Activated CD4-positive, alpha-beta T cell treated with anti-CD3 and anti-CD28 coated beads, Interleukin-2, amount 10 ng/mL, durations not matched to agents 24 days and 14 days (primary cell): ENCODE measurements at regions of chr3 and their contacts with region 1.

Region 1: DNA sequence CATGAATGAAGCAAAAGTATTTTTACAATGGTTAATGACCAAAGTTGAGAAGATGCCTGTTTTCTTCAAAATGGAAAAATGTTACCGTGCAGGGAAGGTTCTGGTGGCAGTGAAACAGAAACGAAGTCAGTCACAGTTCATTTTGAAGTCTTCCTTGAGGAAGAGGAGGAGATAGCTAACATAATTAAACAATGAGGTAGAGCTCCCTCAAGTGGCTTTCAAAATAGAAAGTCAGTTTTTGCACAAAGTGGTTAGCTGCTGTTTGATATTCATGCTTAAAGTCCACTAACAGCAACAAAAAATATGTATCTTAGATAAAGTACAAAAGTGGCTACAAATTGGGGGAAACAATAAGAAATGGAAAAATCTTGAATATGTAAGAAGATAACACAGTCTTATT is 87.3 kb downstream of the TFG start:
- DNase-seq: no peak
- H3K4me3 Mint-ChIP-seq: peak overlapping the region; percentile 24
- H3K27ac Mint-ChIP-seq: no peak overlapping the region
- H3K4me1 Mint-ChIP-seq: peaks cover 5% of the 10 kb centered on the region
- H3K27me3 Mint-ChIP-seq: peaks cover 12% of the 10 kb centered on the region

Region 2: DNA sequence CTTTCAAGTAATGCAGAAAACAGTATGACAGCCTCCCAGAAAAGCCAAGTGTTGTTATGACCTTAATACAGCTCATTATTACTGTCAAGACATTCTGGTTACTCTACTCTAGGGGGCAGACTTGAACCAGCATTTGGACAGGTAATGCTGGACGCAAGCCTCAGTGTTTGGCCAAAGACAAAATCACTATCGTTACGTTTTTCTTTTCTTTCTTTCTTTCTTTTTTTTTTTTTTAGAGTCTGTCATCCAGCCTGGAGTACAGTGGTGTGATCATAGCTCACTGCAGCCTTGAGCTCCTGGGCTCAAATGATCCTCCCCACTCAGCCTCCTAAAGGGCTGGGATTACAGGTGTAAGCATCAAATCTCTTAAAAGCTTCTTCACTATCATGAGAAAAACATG is 333.6 kb before region 1 on chr3:
- intact Hi-C with region 1: loop called (anchors 5 kb)
- DNase-seq: peak; percentile 70
- H3K4me3 Mint-ChIP-seq: no peak overlapping the region
- H3K27ac Mint-ChIP-seq: no peak overlapping the region
- H3K4me1 Mint-ChIP-seq: peaks cover 5% of the 10 kb centered on the region
- H3K27me3 Mint-ChIP-seq: no peaks in the 10 kb centered on the region

Region 3: GRCh38 chr3:100737334-100737733 is 59.2 kb before region 1 on chr3:
- intact Hi-C with region 1: loop called (anchors 5 kb)
- DNase-seq: no peak
- H3K4me3 Mint-ChIP-seq: no peak overlapping the region
- H3K27ac Mint-ChIP-seq: no peak overlapping the region
- H3K4me1 Mint-ChIP-seq: peaks cover 13% of the 10 kb centered on the region
- H3K27me3 Mint-ChIP-seq: no peaks in the 10 kb centered on the region